ENCODE measurements at regions of chr12 and their contacts with region 1.

Region 1: GRCh38 chr12:15293731-15294130 is 28.6 kb upstream of the PTPRO start:
- DNase-seq: no peak
- H3K4me3 ChIP-seq: no peak overlapping the region
- H3K27ac ChIP-seq: no peak overlapping the region
- H3K4me1 ChIP-seq: no peaks in the 10 kb centered on the region
- H3K27me3 ChIP-seq: no peaks in the 10 kb centered on the region
- CTCF ChIP-seq: no peak
- EP300 ChIP-seq: no peak
- POLR2A ChIP-seq: no peak

Region 2: GRCh38 chr12:15230751-15231150 is 63.0 kb before region 1 on chr12:
- intact Hi-C with region 1: no loop called
- DNase-seq: no peak
- H3K4me3 ChIP-seq: no peak overlapping the region
- H3K27ac ChIP-seq: no peak overlapping the region
- H3K4me1 ChIP-seq: peaks cover 2% of the 10 kb centered on the region
- H3K27me3 ChIP-seq: no peaks in the 10 kb centered on the region
- CTCF ChIP-seq: no peak
- EP300 ChIP-seq: no peak
- POLR2A ChIP-seq: no peak

Region 3: GRCh38 chr12:15863984-15864383 is 570.3 kb after region 1 on chr12:
- intact Hi-C with region 1: loop called in 1 of 4 experiments (anchors 10 kb)
- DNase-seq: no peak
- H3K4me3 ChIP-seq: no peak overlapping the region
- H3K27ac ChIP-seq: no peak overlapping the region
- H3K4me1 ChIP-seq: no peaks in the 10 kb centered on the region
- H3K27me3 ChIP-seq: no peaks in the 10 kb centered on the region
- CTCF ChIP-seq: no peak
- EP300 ChIP-seq: no peak
- POLR2A ChIP-seq: no peak